ENCODE measurements at regions of chr1 and their contacts with region 1.

Region 1: GRCh38 chr1:200351826-200352549 is 57.8 kb downstream of the ZNF281 start:
- DNase-seq: no peak
- H3K4me3 Mint-ChIP-seq: peak overlapping the region; percentile 34
- H3K27ac Mint-ChIP-seq: peak overlapping the region; percentile 24
- H3K4me1 Mint-ChIP-seq: peaks cover 44% of the 10 kb centered on the region
- H3K27me3 Mint-ChIP-seq: peaks cover 5% of the 10 kb centered on the region

Region 2: DNA sequence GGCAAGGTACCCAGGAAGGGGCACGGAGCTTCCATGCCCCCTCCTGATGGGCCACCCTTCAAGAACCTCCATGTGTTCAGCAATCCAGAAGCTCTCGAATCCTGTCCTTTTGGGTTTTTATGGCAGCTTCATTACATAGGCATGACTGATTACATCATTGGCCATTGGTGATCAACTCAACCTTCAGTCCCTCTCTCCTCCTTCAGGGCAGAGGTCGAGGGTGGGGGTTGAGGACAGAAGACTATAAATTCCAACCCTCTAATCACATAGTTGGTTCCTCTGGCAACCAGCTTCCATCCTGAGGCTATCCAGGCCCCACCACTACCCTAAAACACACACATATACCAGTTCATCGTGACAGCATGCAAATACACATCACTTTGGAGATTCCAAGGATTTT is 77.9 kb before region 1 on chr1:
- intact Hi-C with region 1: loop called (anchors 5 kb)
- DNase-seq: no peak
- H3K4me3 Mint-ChIP-seq: no peak overlapping the region
- H3K27ac Mint-ChIP-seq: no peak overlapping the region
- H3K4me1 Mint-ChIP-seq: peaks cover 8% of the 10 kb centered on the region
- H3K27me3 Mint-ChIP-seq: peaks cover 18% of the 10 kb centered on the region

Region 3: GRCh38 chr1:200302192-200302920 is 49.6 kb before region 1 on chr1:
- intact Hi-C with region 1: loop called (anchors 2 kb)
- DNase-seq: peak; percentile 52
- H3K4me3 Mint-ChIP-seq: peak overlapping the region; percentile 77
- H3K27ac Mint-ChIP-seq: no peak overlapping the region
- H3K4me1 Mint-ChIP-seq: peaks cover 23% of the 10 kb centered on the region
- H3K27me3 Mint-ChIP-seq: peaks cover 54% of the 10 kb centered on the region

Region 4: DNA sequence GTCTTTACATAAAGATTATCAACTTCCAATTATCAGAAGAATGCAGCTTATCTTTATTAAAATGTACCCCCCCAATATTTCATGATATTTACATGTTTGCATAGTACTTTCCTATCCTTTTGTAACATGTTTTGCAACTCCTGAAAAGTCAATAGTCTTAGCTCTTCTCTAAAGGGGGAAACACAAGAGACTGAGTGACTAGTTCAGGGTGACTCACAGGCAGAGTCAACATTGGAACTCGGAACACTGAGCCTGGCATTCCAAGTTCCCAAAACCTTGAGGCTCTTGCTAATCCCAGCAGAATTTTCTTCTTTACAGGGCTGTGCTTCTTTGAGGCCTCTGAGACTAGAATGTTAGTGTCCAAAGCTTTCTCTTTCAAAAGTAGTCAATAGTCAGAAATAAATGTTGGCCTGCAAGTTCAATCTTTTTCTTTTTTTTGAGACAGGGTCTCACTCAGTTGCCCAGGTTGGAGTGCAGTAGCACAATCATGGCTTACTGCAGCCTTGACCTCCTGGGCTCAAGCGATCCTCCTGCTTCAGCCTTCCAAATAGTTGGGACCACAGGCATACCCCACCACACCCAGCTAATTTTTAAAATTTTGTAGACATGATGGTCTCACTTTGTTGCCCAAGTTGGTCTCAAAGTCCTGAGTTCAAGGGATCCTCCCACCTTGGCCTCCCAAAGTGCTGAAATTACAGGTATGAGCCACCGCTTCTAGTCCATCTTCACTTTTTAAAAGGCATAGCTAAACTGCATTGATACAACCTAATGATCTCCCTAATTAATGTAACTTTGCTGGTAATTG is 20.3 kb after region 1 on chr1:
- intact Hi-C with region 1: no loop called
- DNase-seq: no peak
- H3K4me3 Mint-ChIP-seq: no peak overlapping the region
- H3K27ac Mint-ChIP-seq: no peak overlapping the region
- H3K4me1 Mint-ChIP-seq: peaks cover 8% of the 10 kb centered on the region
- H3K27me3 Mint-ChIP-seq: peaks cover 2% of the 10 kb centered on the region

Region 5: DNA sequence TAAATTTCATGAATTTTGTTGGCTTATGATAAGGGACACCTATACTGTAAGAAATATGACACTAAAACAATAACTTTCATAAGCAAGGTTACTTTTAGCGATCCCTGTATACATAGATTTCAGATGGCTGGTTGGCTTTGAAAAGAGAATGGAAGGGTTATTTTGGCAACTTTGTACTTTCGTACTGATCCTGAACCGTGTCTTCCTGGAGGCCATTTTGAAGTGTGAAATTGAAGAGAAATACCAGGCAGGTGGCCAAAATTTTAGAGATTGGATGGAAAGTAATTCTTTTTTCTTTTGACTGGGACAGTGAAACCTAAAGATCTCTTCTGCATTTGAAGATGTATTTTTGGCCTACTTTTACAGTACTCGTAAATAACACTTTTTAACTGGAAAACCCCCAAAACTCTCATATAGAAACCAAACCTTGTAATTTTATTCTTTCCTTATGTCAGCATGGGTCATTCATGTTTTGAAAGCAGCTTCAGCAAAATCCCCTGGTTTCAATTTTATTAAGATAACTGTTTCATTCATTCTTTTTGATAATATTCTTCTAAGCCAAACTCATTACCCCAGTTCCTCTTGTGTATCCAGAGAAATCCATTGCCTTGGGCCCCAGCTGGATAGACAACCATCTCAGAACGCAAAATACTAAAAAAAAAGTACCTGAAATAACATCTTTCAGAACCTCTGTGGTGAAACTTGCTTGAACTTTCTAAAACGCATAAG is 96.2 kb after region 1 on chr1:
- intact Hi-C with region 1: loop called (anchors 1 kb)
- DNase-seq: no peak
- H3K4me3 Mint-ChIP-seq: peak overlapping the region; percentile 6
- H3K27ac Mint-ChIP-seq: peak overlapping the region; percentile 92
- H3K4me1 Mint-ChIP-seq: peaks cover 38% of the 10 kb centered on the region
- H3K27me3 Mint-ChIP-seq: peaks cover 5% of the 10 kb centered on the region

Measured in activated T-helper 2 cell treated with anti-CD3 and anti-CD28 coated beads, Interferon-gamma antibody, Interleukin-2, Interleukin-4, amounts not matched to agents 10 μg/mL and 5 μg/mL and 100 μg/mL, durations not matched to agents 14 hours and 24 hours and 36 hours (primary cell).